Right lobe of liver (tissue), 6 donors: ENCODE measurements at regions of chr15 and their contacts with region 1.

Region 1: DNA sequence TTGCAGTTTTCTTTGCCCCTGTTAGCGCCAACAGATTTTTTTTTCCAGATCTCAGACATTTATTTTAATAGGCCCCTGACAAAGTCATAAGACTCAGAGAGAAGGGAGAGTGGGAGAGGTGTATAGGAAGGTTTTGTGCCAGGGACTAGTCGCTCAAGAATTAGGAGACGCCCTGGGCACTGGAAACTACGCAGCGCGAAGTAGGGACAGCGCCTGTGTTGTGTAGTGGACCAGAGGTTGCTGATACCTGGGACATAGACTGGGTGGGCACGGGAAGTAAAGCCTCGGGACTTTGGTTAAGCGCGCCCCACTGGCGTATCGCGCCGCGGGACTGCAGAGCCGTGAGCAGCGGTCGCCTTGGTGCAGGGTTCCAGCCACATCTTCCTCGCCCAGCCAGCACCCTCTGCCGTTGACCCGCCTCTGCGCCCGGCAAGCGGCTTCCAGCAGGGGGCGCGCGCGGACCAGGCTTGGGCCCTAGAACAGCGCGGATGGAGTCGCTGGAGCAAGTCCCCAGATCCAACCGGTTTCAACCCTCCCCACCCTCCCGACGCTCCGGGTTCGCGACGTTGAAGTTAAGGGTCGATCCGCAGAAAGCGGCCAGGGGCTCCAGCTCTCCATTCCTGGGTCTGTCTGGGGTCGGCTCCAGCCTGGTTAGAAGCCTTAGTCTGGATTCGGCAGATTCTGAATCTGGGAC is 3.0 kb upstream of the ISLR2 start:
- DNase-seq: peak; percentile 89 to 90 (median 89)
- ATAC-seq: peak; percentile 96 to 99 (median 98)
- H3K4me3 ChIP-seq: peak overlapping the region in 2 of 3 donors; percentile 5 to 33
- H3K27ac ChIP-seq: no peak overlapping the region
- H3K4me1 ChIP-seq: peaks cover 0 to 12% (median 5%) of the 10 kb centered on the region in 4 donors
- H3K27me3 ChIP-seq: peaks cover 17 to 19% of the 10 kb centered on the region in 2 donors
- CTCF ChIP-seq: peak; percentile 96 to 99 (median 98)
- POLR2A ChIP-seq: no peak

Region 2: DNA sequence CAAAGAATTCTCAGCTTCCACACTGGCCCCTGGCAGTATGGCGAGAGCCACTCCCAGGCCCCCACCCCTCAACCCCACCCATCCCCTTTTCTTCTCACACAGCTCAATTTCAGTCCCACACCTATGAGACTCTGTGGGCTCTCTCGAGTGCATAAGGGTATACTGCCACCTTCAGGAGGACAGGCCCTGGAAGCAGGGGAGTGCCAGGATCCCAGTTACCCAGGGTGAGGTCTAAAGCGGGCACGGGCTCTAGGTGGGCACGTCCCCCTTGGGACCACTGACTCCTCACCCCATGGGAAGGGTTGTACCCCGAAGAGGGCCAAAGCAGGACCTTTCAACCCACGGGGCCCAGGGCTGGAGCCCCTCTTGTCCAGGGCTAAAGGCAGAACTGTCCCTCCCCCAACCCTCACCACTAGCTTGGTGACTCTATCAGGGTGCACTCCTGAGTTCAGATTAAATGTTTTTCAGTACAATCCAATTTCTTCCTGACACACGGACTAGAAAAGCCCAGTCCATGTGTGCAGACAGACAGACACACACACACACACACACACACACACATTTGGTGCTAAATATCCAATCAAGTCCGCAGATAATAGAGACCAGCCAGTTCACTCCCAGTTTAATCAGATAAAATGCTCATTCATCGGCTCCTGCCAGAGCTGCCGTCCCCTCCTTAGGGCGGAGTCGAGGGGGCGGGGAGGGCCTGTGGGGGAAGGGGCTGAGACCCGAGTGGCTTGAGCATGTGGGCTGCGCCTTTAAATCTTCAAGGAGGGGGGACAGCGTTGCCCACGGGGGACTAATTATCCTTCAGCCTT is 180.6 kb after region 1 on chr15:
- intact Hi-C with region 1: loop called (anchors 5 kb)
- DNase-seq: peak in 2 of 3 donors; percentile 48 to 54
- ATAC-seq: peak; percentile 74 to 86 (median 78)
- H3K4me3 ChIP-seq: no peak overlapping the region
- H3K27ac ChIP-seq: no peak overlapping the region
- H3K4me1 ChIP-seq: no peaks in the 10 kb centered on the region
- H3K27me3 ChIP-seq: no peaks in the 10 kb centered on the region
- CTCF ChIP-seq: peak; percentile 46 to 68 (median 54)
- POLR2A ChIP-seq: no peak